Thyroid gland (tissue), 4 donors: ENCODE measurements at regions of chr3 and their contacts with region 1.

Region 1: DNA sequence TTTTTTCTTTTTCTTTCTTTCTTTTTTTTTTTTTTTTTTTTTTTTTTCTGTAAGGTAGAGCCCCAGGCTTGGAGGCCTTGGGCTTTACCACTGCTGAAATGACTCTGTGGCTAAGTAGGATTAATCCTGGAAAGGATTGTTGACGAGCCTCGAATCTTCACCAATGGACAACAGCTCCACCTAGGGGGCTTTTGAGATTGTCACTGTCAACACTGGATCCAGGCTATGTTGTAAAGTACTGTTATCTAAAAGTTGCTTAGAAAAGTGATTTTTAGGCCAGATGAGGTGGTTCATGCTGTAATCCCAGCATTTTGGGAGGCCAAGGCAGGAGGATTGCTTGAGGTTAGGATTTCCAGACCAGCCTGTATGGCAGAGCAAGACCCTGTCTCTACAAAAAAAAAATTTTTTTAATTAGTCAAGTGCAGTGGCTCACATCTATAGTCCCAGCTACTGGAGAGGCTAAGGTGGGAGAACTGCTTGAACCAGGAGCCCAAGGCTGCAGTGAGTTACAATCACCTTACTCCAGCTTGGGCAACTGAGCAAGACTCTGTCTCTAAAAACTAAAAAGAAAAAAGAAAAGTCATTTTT is 41.6 kb downstream of the KLHL18 start:
- DNase-seq: peak; percentile 64 to 68
- H3K4me3 ChIP-seq: no peak overlapping the region
- H3K27ac ChIP-seq: no peak overlapping the region
- H3K4me1 ChIP-seq: peaks cover 0 to under 1% of the 10 kb centered on the region in 2 donors
- H3K27me3 ChIP-seq: no peaks in the 10 kb centered on the region
- CTCF ChIP-seq: peak; percentile 36 to 79 (median 70)
- POLR2A ChIP-seq: no peak

Region 2: GRCh38 chr3:47164007-47164881 is 160.1 kb before region 1 on chr3 and contains the start of gene SETD2:
- intact Hi-C with region 1: loop called (anchors 10 kb)
- DNase-seq: peak; percentile 97
- H3K4me3 ChIP-seq: peak within 1 kb of the TSS; percentile 45 to 89 (median 55)
- H3K27ac ChIP-seq: peak within 1 kb of the TSS; percentile 89 to 94 (median 93)
- H3K4me1 ChIP-seq: peaks cover 37 to 41% of the 10 kb centered on the region in 2 donors
- H3K27me3 ChIP-seq: no peaks in the 10 kb centered on the region
- CTCF ChIP-seq: peak in 3 of 6 experiments; percentile 29 to 51 (median 31)
- POLR2A ChIP-seq: peak in 1 of 2 donors; percentile 75
- total RNA-seq, gene SETD2: 74.3 to 128 (median 85.5) TPM

Region 3: DNA sequence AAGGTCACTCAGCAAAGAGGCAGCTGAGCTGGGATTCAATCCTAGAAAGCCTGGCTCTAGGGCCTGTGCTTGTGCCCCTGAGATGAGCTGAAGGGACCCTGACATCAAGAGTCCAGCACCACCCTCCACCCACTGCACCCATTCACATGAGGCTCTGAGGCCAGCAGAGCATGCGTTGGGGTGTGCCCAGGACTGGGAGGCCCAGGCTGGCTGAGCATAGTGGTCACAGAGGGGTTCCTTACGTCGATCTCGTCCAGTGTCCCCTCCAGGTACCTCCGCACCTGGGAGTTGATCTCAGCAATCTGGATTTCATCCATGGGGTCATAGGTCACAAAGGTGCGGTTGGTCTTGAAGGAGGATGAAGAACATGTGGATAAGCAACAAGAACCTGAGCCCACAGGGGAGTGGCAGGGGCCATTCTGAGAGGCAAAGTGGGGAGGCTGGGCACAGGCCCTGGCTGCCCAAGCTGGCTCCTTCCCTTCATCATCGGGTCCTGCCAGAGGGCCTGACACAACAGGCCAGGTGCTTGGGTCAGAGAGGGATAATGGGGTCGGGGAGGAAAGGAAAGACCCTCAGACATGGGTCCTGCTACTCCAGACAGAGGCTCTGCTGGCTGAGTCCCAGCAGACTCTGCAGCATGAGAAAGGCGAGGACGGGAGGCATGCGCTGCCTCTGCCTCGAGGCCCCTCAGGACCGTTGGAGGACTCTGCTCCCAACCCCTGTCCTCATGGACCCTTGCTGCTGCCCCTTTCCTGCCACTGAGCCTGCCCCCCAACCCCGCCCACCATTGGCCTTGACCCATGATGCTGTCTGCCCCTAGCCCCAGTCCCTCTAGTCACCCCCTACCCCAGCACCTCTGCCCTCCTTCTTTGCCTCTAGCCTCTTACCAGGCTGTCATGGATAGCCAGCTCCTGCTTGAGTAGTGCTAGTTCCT is 77.0 kb before region 1 on chr3:
- intact Hi-C with region 1: loop called (anchors 5 kb)
- DNase-seq: no peak
- H3K4me3 ChIP-seq: no peak overlapping the region
- H3K27ac ChIP-seq: no peak overlapping the region
- H3K4me1 ChIP-seq: peaks cover 0 to 16% of the 10 kb centered on the region in 2 donors
- H3K27me3 ChIP-seq: no peaks in the 10 kb centered on the region
- CTCF ChIP-seq: no peak
- POLR2A ChIP-seq: no peak

Region 4: GRCh38 chr3:47359323-47359722 is 35.0 kb after region 1 on chr3:
- intact Hi-C with region 1: no loop called
- DNase-seq: no peak
- H3K4me3 ChIP-seq: no peak overlapping the region
- H3K27ac ChIP-seq: no peak overlapping the region
- H3K4me1 ChIP-seq: no peaks in the 10 kb centered on the region
- H3K27me3 ChIP-seq: no peaks in the 10 kb centered on the region
- CTCF ChIP-seq: no peak
- POLR2A ChIP-seq: no peak